B cell (primary cell): ENCODE measurements at regions of chr6 and their contacts with region 1.

Region 1: DNA sequence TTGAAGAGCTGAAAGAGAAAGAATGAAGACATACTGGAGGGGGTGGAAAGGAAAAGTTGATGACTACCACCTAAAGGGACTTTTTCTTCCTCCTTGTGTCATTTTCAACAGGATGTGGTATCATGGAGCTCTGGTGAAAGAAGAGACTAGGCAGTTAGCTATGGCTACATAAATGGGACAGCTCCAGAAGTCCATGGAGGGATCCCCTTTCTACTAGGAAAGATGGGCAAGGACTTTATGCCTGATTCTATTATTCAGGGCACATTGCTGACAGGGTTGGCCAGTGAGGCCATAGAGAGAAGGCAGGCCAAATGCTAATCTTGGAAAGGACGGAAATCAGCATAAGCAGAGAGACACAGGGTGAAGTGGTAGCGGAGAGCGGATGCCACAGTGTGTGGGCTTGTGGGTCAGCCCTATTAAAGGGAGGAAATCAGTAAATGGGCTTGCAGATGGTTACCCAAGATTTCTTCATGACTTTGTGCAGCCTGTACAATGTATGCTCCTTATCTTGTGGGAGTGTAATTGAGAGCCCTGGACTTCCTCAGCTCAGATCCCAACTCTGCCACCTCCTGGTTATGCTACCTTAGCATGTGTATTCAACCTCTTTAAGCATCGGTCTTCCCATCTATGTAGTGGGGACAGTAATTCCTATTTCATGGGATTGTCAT is 77.4 kb upstream of the TMEM170B start:
- DNase-seq: peak; percentile 51
- ATAC-seq: peak; percentile 19
- H3K4me3 ChIP-seq: peak overlapping the region; percentile 7 to 58 (median 19)
- H3K4me3 Mint-ChIP-seq: peak overlapping the region; percentile 87
- H3K27ac ChIP-seq: peak overlapping the region; percentile 88 to 96
- H3K27ac Mint-ChIP-seq: peak overlapping the region; percentile 95
- H3K4me1 ChIP-seq: peaks cover 51 to 55% of the 10 kb centered on the region in 2 donors
- H3K4me1 Mint-ChIP-seq: peaks cover 70% of the 10 kb centered on the region
- H3K27me3 ChIP-seq: no peaks in the 10 kb centered on the region
- H3K27me3 Mint-ChIP-seq: no peaks in the 10 kb centered on the region
- CTCF ChIP-seq: no peak

Region 2: DNA sequence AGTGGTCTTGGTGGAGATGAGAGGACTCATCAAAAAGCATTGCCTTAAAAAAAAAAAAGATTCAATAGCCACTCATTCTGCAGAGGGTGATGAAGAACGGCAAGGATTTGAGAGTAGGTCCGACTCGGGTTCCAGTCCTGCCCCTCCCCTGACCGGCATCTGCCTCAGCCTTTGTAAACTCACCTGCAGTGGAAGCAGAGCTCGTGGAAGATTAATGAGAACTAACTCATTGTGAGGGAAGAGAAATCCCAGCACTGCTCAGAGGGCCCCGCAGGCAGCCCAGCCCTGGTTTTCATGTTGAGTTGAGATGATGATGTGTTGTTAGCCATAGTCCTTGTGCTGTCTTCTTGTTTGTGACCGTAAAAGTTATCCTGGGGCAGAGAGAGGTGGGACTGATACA is 879.6 kb before region 1 on chr6:
- CTCF ChIA-PET with region 1: no interaction called
- POLR2A ChIA-PET with region 1: no interaction called
- intact Hi-C with region 1: no loop called
- DNase-seq: no peak
- ATAC-seq: no peak
- H3K4me3 ChIP-seq: no peak overlapping the region
- H3K4me3 Mint-ChIP-seq: no peak overlapping the region
- H3K27ac ChIP-seq: no peak overlapping the region
- H3K27ac Mint-ChIP-seq: no peak overlapping the region
- H3K4me1 ChIP-seq: no peaks in the 10 kb centered on the region
- H3K4me1 Mint-ChIP-seq: peaks cover 18% of the 10 kb centered on the region
- H3K27me3 ChIP-seq: no peaks in the 10 kb centered on the region
- H3K27me3 Mint-ChIP-seq: no peaks in the 10 kb centered on the region
- CTCF ChIP-seq: no peak

Region 3: GRCh38 chr6:11093589-11094410 is 366.3 kb before region 1 on chr6 and contains the start of gene SMIM13:
- CTCF ChIA-PET with region 1: no interaction called
- POLR2A ChIA-PET with region 1: no interaction called
- intact Hi-C with region 1: loop called (anchors 2 kb)
- DNase-seq: peak; percentile 96
- ATAC-seq: peak; percentile 90
- H3K4me3 ChIP-seq: peak within 1 kb of the TSS; percentile 65 to 95 (median 89)
- H3K4me3 Mint-ChIP-seq: peak within 1 kb of the TSS; percentile 97
- H3K27ac ChIP-seq: peak within 1 kb of the TSS; percentile 91 to 93
- H3K27ac Mint-ChIP-seq: peak within 1 kb of the TSS; percentile 97
- H3K4me1 ChIP-seq: peaks cover 12% of the 10 kb centered on the region in 2 donors
- H3K4me1 Mint-ChIP-seq: peaks cover 22% of the 10 kb centered on the region
- H3K27me3 ChIP-seq: no peaks in the 10 kb centered on the region
- H3K27me3 Mint-ChIP-seq: peaks cover 3% of the 10 kb centered on the region
- CTCF ChIP-seq: peak; percentile 74
- total RNA-seq, gene SMIM13: 5.5 and 7.0 TPM in 2 replicates

Region 4: GRCh38 chr6:11232193-11232769 is 227.9 kb before region 1 on chr6 and contains the start of gene NEDD9:
- CTCF ChIA-PET with region 1: no interaction called
- POLR2A ChIA-PET with region 1: no interaction called
- intact Hi-C with region 1: loop called (anchors 1 kb)
- DNase-seq: peak; percentile 93
- ATAC-seq: peak; percentile 100
- H3K4me3 ChIP-seq: peak within 1 kb of the TSS; percentile 52 to 76 (median 67)
- H3K4me3 Mint-ChIP-seq: peak within 1 kb of the TSS; percentile 98
- H3K27ac ChIP-seq: peak within 1 kb of the TSS; percentile 70 to 81
- H3K27ac Mint-ChIP-seq: peak within 1 kb of the TSS; percentile 93
- H3K4me1 ChIP-seq: peaks cover 35 to 37% of the 10 kb centered on the region in 2 donors
- H3K4me1 Mint-ChIP-seq: peaks cover 54% of the 10 kb centered on the region
- H3K27me3 ChIP-seq: no peaks in the 10 kb centered on the region
- H3K27me3 Mint-ChIP-seq: no peaks in the 10 kb centered on the region
- CTCF ChIP-seq: no peak
- total RNA-seq, gene NEDD9: 46.2 and 50.9 TPM in 2 replicates

Region 5: DNA sequence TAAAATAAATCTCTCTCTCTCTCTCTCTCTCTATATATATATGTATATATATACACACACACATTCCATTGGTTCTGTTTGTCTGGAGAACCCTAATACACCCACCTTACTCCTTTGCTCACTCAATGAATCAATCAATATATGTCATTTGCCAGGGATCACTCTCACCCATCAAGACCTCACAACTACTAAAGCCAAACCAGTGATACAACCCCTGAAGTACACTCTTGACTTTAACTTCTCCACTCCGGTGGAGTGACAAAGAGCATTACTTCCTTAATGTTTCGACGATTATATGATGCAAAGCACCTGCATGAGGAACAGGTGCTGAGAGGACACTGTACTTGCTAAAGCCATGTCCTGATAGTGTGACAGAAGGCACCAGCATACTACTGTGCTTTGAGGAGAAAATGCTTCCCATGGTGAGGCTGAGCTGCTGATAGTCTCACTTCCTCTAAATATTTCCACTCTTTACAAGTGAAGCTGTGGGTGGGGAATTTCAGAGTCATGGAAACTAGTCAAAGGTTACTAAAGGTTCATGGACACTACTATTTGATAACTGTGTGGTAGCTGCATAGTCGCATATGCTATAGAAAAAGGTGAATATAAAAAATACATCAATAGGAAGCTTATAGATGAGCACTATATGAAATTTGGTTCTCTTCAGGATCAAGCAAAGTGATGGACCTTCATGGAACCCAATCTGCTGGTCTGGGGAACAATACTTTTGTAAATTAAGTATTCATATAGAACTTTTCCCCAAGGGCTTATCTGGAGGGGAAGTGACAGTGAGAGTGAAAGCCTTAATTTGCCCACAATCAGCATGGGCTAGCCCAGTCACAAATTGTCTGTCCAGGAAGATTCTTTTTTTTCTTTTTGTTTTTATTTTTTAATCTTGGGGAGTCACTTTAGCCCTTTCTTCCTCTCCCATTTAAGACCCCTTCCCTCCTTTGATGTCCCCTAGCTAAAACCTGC is 85.8 kb before region 1 on chr6:
- CTCF ChIA-PET with region 1: interaction called, 3 read pairs
- POLR2A ChIA-PET with region 1: interaction called, 4 read pairs
- intact Hi-C with region 1: loop called (anchors 1 kb)
- DNase-seq: peak; percentile 90
- ATAC-seq: peak; percentile 90
- H3K4me3 ChIP-seq: no peak overlapping the region
- H3K4me3 Mint-ChIP-seq: peak overlapping the region; percentile 35
- H3K27ac ChIP-seq: peak overlapping the region; percentile 61 to 73
- H3K27ac Mint-ChIP-seq: peak overlapping the region; percentile 69
- H3K4me1 ChIP-seq: peaks cover 67 to 73% of the 10 kb centered on the region in 2 donors
- H3K4me1 Mint-ChIP-seq: peaks cover 84% of the 10 kb centered on the region
- H3K27me3 ChIP-seq: no peaks in the 10 kb centered on the region
- H3K27me3 Mint-ChIP-seq: no peaks in the 10 kb centered on the region
- CTCF ChIP-seq: no peak

Region 6: DNA sequence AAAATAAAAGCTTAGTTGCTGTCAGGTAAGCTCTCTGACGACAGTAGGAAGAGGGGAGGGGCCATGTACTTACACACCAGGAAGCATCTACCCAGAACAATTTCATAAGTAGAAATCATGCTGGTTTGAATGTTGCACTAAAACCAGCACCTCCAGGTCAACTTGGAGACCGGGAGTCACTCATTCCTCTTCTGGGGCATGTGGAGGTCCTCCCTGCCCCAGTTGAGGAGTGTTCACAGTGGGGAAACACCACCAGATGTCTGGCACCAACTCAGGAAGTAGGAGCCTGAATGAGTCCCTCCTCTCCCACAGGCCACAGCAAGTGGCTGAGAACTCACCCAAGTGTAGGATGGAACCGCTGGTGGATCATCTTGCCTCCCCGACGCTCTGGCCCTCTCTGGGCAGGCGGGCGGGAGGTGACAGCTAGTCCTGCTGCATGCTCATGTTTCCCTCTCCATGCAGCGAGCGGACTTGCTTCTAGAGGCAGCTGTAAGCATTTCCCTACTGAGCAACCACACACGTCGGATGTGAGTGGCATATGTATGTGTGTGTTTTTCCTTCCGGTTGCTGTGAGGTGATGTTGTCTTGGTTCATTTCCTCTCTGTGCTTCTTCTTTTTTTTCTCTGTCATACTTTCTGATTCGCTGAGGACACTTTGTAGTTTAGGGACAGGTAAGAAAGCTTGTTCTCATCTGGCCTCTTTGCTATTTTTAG is 78.2 kb before region 1 on chr6:
- CTCF ChIA-PET with region 1: interaction called, 20 read pairs
- POLR2A ChIA-PET with region 1: interaction called, 8 read pairs
- intact Hi-C with region 1: loop called (anchors 1 kb)
- DNase-seq: peak; percentile 91
- ATAC-seq: peak; percentile 92
- H3K4me3 ChIP-seq: peak overlapping the region; percentile 62 to 93 (median 80)
- H3K4me3 Mint-ChIP-seq: peak overlapping the region; percentile 95
- H3K27ac ChIP-seq: peak overlapping the region; percentile 81 to 85
- H3K27ac Mint-ChIP-seq: peak overlapping the region; percentile 88
- H3K4me1 ChIP-seq: peaks cover 64 to 74% of the 10 kb centered on the region in 2 donors
- H3K4me1 Mint-ChIP-seq: peaks cover 83% of the 10 kb centered on the region
- H3K27me3 ChIP-seq: no peaks in the 10 kb centered on the region
- H3K27me3 Mint-ChIP-seq: no peaks in the 10 kb centered on the region
- CTCF ChIP-seq: no peak

Region 7: DNA sequence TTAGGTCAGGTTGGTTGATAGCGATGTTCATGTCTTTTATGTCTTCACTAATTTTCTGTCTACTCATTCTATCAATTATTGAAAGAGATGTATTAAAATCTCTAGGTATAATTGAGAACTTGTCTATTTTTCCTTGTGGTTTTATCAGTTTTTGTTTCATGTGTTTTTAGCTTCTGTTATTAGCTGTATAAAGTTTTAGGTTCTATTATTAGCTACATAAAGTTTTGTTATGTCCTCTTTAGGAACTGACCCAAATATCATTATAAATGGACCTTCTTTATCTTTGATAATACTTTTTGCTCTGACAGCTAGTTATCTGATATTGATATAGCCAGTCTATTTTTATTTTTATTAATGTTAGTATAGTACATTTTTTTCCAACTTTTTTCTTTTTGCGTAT is 15.0 kb before region 1 on chr6:
- CTCF ChIA-PET with region 1: interaction called, 4 read pairs
- POLR2A ChIA-PET with region 1: no interaction called
- intact Hi-C with region 1: loop called (anchors 2 kb)
- DNase-seq: no peak
- ATAC-seq: no peak
- H3K4me3 ChIP-seq: peak overlapping the region in 1 of 5 experiments; percentile 4
- H3K4me3 Mint-ChIP-seq: peak overlapping the region; percentile 27
- H3K27ac ChIP-seq: peak overlapping the region in 1 of 2 donors; percentile 62
- H3K27ac Mint-ChIP-seq: peak overlapping the region; percentile 11
- H3K4me1 ChIP-seq: peaks cover 32 to 45% of the 10 kb centered on the region in 2 donors
- H3K4me1 Mint-ChIP-seq: peaks cover 60% of the 10 kb centered on the region
- H3K27me3 ChIP-seq: no peaks in the 10 kb centered on the region
- H3K27me3 Mint-ChIP-seq: no peaks in the 10 kb centered on the region
- CTCF ChIP-seq: no peak